ENCODE measurements at regions of chr4 and their contacts with region 1.

Region 1: DNA sequence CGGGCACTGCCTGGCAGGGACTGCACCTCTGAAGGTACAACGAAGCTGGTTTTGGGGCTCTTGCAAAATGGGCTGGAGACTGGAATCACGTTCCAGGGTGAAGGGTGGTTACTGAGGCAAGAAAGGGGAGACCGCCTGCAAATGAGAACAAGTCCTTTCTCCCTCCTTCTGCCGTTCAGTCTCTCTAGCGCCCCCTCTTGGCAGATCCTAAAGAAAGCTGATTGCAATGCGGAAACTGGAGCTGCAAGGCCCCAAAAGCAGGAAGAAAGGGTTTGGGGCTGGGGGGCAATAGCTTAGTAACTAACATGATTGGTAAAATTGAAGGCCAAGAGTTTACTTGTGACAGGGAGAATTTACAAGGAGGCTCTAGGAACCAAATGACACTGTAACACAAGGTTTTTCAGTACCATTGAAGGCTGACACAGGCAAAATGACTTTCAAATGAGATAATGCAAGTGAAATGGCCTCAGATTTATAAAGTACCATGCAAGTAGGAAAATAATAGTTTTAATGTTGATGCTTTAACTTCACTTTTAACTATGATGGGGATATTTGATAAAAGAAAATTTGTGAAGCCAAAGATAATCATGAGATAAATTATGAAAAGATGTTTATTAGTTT is 222.7 kb upstream of the HAND2 start:
- DNase-seq: peak; percentile 58
- ATAC-seq: peak; percentile 78
- H3K4me3 ChIP-seq: no peak overlapping the region
- H3K27ac ChIP-seq: no peak overlapping the region
- H3K4me1 ChIP-seq: no peaks in the 10 kb centered on the region
- H3K27me3 ChIP-seq: peaks cover 5% of the 10 kb centered on the region; the same call in 1 of the 2 replicates
- CTCF ChIP-seq: peak; percentile 30 to 91 (median 83); a peak in 5 of 6 replicates
- POLR2A ChIP-seq: no peak
- RAD21 ChIP-seq: peak; percentile 38

Region 2: GRCh38 chr4:173763374-173763773 is 10.7 kb after region 1 on chr4:
- CTCF ChIA-PET with region 1: interaction called, 13 read pairs
- POLR2A ChIA-PET with region 1: no interaction called
- RAD21 ChIA-PET with region 1: no interaction called
- intact Hi-C with region 1: no loop called
- DNase-seq: no peak
- ATAC-seq: no peak
- H3K4me3 ChIP-seq: no peak overlapping the region
- H3K27ac ChIP-seq: no peak overlapping the region
- H3K4me1 ChIP-seq: no peaks in the 10 kb centered on the region
- H3K27me3 ChIP-seq: peaks cover 20% of the 10 kb centered on the region; the same call in 1 of the 2 replicates
- CTCF ChIP-seq: no peak
- POLR2A ChIP-seq: no peak
- RAD21 ChIP-seq: no peak